ENCODE measurements at regions of chr3 and their contacts with region 1.

Region 1: DNA sequence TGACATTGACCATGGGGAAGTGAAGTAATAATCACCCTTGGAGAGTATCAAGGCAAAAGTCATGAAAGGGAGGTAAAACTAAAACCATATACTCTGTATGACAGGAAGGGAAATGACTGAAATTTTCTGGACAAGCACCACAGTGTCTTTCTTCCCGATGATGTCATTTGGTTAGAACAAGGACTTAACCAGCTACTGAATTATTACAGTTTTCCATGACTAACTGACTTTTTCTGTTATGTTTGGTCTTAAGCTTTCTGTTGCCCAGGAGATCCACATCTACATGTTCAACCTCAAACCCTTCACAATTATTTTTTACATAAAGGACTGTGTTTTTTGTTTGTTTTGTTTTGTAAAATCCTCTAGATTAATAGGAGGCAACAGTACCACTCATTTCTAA is 191.9 kb upstream of the IL12A start:
- DNase-seq: no peak
- ATAC-seq: peak; percentile 77
- H3K4me3 ChIP-seq: no peak overlapping the region
- H3K27ac ChIP-seq: peak overlapping the region in 1 of 2 donors; percentile 99
- H3K4me1 ChIP-seq: peaks cover 12 to 25% of the 10 kb centered on the region in 2 donors
- H3K27me3 ChIP-seq: no peaks in the 10 kb centered on the region

Region 2: GRCh38 chr3:159091936-159092335 is 704.8 kb before region 1 on chr3:
- intact Hi-C with region 1: no loop called
- DNase-seq: no peak
- ATAC-seq: no peak
- H3K4me3 ChIP-seq: no peak overlapping the region
- H3K27ac ChIP-seq: no peak overlapping the region
- H3K4me1 ChIP-seq: no peaks in the 10 kb centered on the region
- H3K27me3 ChIP-seq: no peaks in the 10 kb centered on the region

Region 3: DNA sequence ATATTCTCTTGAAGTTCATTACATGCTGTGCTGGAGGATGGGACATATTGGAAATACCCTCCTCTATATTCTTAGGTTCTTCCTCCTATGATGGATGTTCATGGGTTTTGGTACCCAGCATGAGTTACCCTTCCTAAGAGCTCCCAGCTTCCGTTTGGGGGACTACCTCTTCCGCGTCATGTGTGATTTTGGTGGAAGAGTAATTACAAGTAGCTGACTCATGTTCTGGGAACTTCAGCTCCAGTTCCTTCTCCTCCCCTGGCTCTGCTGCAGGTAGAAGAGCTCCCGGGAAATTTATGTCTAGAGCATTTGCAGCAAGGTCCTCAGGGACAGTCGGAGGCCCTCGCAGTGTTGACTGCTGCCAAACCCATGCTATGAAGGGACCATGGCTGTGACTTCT is 16.9 kb before region 1 on chr3:
- intact Hi-C with region 1: loop called in 1 of 2 experiments (anchors 2 kb)
- DNase-seq: no peak
- ATAC-seq: no peak
- H3K4me3 ChIP-seq: no peak overlapping the region
- H3K27ac ChIP-seq: peak overlapping the region; percentile 3 to 52
- H3K4me1 ChIP-seq: peaks cover 5 to 16% of the 10 kb centered on the region in 2 donors
- H3K27me3 ChIP-seq: no peaks in the 10 kb centered on the region

Measured in aorta (tissue), 5 donors.